WTC11 (cell line): ENCODE measurements at regions of chr19 and their contacts with region 1.

Region 1: DNA sequence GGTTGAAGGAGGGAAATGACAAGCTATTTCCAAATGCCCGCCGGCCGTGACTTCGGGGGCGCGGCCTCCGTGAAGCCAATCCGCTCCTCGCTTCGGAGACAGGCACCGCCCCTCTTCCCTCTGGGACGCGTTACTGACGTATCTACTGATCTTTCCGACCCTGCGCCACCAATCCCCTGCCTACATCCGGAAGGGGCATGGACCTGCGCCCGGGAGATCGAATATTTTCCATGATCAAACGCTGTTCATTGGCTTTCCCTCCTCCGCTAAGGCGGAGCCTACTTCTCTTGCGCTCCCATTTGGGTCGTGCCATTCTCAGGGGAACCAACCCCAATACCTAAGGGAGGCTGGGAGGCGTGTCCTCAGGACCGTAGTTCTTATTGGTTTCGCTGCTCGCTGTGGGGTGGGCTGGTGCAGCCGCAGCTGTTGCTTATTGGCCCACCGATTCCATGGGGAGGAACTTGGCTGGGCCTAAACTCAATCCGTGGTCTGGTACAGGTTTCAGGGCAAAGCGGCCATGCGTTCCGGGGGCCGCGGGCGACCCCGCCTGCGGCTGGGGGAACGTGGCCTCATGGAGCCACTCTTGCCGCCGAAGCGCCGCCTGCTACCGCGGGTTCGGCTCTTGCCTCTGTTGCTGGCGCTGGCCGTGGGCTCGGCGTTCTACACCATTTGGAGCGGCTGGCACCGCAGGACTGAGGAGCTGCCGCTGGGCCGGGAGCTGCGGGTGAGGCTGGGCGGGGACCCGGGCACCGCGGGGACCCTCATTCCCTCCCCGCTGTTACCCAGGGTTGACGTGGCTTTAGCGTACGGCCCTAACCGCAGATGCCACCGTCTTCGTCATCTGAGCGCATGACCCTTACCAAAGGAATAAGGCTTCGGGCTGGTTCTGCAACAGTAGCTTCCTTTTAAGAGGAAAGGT is at the start of gene QPCTL:
- DNase-seq: peak; percentile 97
- ATAC-seq: peak; percentile 95
- H3K4me3 Mint-ChIP-seq: peak within 1 kb of the TSS; percentile 96
- H3K27ac Mint-ChIP-seq: peak within 1 kb of the TSS; percentile 100
- H3K4me1 Mint-ChIP-seq: peaks cover 6% of the 10 kb centered on the region; the same call in 1 of the 2 replicates
- H3K27me3 Mint-ChIP-seq: peaks cover 3% of the 10 kb centered on the region; the same call in 1 of the 2 replicates
- CTCF ChIP-seq: no peak
- total RNA-seq, gene QPCTL: 23.8 to 33.3 TPM (median 27.5 TPM) in 3 replicates

Region 2: GRCh38 chr19:45591004-45591637 is 101.3 kb before region 1 on chr19:
- CTCF ChIA-PET with region 1: interaction called, 10 read pairs
- POLR2A ChIA-PET with region 1: no interaction called
- DNase-seq: peak; percentile 84
- ATAC-seq: peak; percentile 95
- H3K4me3 Mint-ChIP-seq: no peak overlapping the region
- H3K27ac Mint-ChIP-seq: no peak overlapping the region
- H3K4me1 Mint-ChIP-seq: peaks cover 6% of the 10 kb centered on the region
- H3K27me3 Mint-ChIP-seq: peaks cover 60% of the 10 kb centered on the region
- CTCF ChIP-seq: no peak

Region 3: GRCh38 chr19:45681391-45682015 is 10.9 kb before region 1 on chr19:
- CTCF ChIA-PET with region 1: interaction called, 86 read pairs
- POLR2A ChIA-PET with region 1: interaction called, 33 read pairs
- DNase-seq: peak; percentile 93
- ATAC-seq: peak; percentile 53
- H3K4me3 Mint-ChIP-seq: peak overlapping the region; percentile 65
- H3K27ac Mint-ChIP-seq: no peak overlapping the region
- H3K4me1 Mint-ChIP-seq: peaks cover 14% of the 10 kb centered on the region
- H3K27me3 Mint-ChIP-seq: peaks cover 38% of the 10 kb centered on the region
- CTCF ChIP-seq: peak; percentile 96

Region 4: DNA sequence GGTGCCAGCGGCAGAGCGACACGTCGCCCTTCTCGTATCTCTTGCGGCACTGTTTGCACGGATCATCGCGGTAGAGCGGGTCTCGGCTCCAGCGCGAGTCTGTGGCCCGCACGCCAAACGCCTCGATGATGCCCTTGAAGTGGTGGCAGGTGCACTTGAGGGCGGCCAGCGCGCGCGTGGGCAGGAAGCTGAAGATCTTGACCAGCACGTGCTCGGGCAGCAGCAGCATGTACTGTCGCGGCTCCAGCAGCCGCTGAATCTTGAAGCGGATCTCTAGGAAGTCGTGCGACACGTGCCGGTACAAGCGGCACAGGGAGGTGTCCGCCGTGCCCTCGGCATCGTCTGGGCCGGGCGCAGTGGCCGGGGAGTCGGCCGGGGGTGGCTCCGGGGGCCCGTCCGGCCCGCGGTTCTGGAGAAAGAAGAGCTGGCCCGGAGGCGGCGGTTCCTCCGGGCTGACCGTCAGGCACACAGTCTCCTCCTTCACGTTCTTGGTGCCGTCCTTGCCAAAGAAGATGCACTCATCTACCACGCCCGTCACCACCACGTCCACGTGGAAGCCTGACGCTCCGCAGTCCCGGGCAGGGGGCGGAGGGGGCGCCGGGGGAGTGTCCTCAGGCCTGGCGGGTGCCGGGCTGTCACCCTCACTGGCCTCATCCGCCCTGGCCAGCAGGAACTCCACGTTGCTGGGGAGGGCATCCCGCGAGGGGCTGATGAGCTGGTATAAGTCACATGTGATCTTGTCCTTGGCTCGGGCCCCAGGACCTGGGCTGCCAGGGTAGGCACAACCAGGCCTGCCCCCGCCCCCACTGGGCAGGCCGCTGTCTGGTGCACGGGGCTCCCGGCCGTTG is 19.6 kb after region 1 on chr19:
- CTCF ChIA-PET with region 1: interaction called, 34 read pairs
- POLR2A ChIA-PET with region 1: interaction called, 38 read pairs
- DNase-seq: no peak
- ATAC-seq: no peak
- H3K4me3 Mint-ChIP-seq: no peak overlapping the region
- H3K27ac Mint-ChIP-seq: peak overlapping the region; percentile 68
- H3K4me1 Mint-ChIP-seq: peaks cover 25% of the 10 kb centered on the region
- H3K27me3 Mint-ChIP-seq: no peaks in the 10 kb centered on the region; the same call in 1 of the 2 replicates
- CTCF ChIP-seq: no peak

Region 5: GRCh38 chr19:45730389-45731288 is 38.2 kb after region 1 on chr19 and contains the start of gene FBXO46:
- CTCF ChIA-PET with region 1: interaction called, 20 read pairs
- POLR2A ChIA-PET with region 1: interaction called, 12 read pairs
- DNase-seq: peak; percentile 97
- ATAC-seq: peak; percentile 97
- H3K4me3 Mint-ChIP-seq: peak within 1 kb of the TSS; percentile 93
- H3K27ac Mint-ChIP-seq: peak within 1 kb of the TSS; percentile 89
- H3K4me1 Mint-ChIP-seq: peaks cover 12% of the 10 kb centered on the region
- H3K27me3 Mint-ChIP-seq: peaks cover 7% of the 10 kb centered on the region; the same call in 1 of the 2 replicates
- CTCF ChIP-seq: no peak
- total RNA-seq, gene FBXO46: 40.1 to 46.3 TPM (median 43.3 TPM) in 3 replicates

Region 6: DNA sequence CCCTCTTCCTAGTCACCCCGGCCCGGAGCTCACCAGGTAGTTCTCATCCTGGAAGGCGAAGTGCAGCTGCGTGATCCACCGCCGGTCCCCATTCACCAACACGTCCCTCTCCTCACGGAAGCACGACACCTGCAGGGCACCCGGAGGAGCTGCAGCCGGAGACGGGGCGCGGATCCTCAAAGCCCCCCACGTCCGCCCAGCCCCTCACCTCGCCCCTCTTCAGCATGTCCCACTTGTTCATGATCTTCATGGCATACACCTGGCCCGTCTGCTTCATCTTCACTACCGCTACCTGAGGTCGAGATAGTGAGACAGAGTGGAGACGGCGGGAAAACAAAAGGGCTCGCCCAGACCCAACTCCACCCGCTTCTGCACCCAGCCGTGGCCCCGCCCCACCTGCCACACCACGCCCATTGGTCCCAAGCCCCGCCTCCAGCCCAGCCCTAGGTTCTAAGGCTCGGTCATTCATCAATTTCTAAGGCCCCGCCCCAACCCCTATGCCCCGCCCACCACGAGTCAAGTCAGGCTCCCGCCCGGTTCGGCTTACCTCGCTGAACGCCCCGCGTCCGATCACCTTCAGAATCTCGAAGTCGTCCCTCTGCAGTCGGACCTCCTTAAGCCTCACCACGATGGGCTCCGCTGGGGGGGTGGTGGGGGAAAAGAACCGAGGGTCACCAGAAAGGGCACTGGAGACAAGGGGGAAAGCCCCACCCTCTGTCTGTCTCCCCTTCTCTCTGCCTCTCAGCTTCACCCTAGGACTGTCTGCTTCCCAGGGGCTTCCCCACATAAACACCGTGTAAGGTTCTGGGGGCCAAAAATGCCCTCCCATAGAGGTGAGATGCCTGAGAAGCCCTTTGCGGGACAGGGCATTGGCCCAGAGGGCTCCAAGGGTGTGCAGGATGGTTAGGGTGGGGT is 87.0 kb after region 1 on chr19:
- CTCF ChIA-PET with region 1: interaction called, 15 read pairs
- POLR2A ChIA-PET with region 1: no interaction called
- DNase-seq: peak; percentile 98
- ATAC-seq: peak; percentile 85
- H3K4me3 Mint-ChIP-seq: peak overlapping the region; percentile 78
- H3K27ac Mint-ChIP-seq: peak overlapping the region; percentile 47; the same call in 1 of the 2 replicates
- H3K4me1 Mint-ChIP-seq: peaks cover 33% of the 10 kb centered on the region
- H3K27me3 Mint-ChIP-seq: peaks cover 35% of the 10 kb centered on the region
- CTCF ChIP-seq: peak; percentile 72; the same call in 1 of the 2 replicates